Activated T-helper 1 cell treated with anti-CD3 and anti-CD28 coated beads, Interleukin-12 subunit alpha, Interleukin-12 subunit beta, Interleukin-2, Interleukin-4 antibody, amounts not matched to agents 30 ng/mL and 10 ng/mL and 1 ng/mL, durations not matched to agents 14 hours and 24 hours and 36 hours (primary cell): ENCODE measurements at regions of chr10 and their contacts with region 1.

Region 1: DNA sequence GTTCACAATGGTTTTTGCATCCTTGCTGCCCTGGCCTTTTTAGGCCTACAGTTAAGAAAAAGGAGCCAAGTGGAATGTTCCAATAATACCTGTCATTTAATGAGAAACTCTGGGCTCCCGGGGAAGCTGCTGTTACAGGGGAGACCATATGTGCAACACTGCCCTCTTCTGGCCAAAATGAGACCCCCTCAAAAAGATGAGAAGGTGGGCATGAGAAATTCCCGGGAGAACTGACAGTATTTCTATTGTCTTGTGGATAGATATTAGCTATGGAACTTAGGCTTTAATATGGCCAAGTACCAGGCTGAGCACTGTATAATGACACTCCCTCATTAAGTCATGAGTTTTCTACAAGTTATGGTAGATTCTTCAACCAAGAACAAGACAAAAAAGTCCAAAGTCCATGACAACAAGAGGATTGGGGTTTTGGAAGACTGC is 99.4 kb downstream of the CCDC3 start:
- DNase-seq: peak; percentile 25
- H3K4me3 Mint-ChIP-seq: no peak overlapping the region
- H3K27ac Mint-ChIP-seq: no peak overlapping the region
- H3K4me1 Mint-ChIP-seq: no peaks in the 10 kb centered on the region
- H3K27me3 Mint-ChIP-seq: no peaks in the 10 kb centered on the region

Region 2: GRCh38 chr10:12018438-12019282 is 883.5 kb before region 1 on chr10:
- intact Hi-C with region 1: no loop called
- DNase-seq: no peak
- H3K4me3 Mint-ChIP-seq: no peak overlapping the region
- H3K27ac Mint-ChIP-seq: no peak overlapping the region
- H3K4me1 Mint-ChIP-seq: peaks cover 8% of the 10 kb centered on the region
- H3K27me3 Mint-ChIP-seq: no peaks in the 10 kb centered on the region

Region 3: DNA sequence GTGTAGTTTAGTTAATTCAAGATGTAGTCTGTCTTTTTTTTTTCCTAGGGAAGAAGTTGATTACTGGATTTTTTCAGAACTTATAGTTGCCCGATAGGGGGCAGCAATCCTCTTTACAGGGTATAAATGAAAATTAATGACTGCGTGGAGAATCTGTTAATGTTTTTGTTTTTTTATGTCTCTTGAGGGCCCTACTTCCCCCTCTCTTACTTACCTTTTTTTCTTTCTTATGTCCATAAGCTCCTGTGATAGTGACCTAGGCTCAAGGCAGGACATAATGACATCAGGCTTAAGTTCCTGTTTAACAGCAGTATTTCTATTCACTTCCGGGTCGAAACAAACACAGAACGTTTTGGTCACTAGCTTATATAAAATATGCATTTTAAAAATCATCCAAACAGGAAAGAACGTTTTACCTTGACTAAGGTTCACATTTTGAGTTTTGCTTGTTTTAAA is 687.4 kb before region 1 on chr10:
- intact Hi-C with region 1: loop called (anchors 2 kb)
- DNase-seq: peak; percentile 15
- H3K4me3 Mint-ChIP-seq: peak overlapping the region; percentile 43
- H3K27ac Mint-ChIP-seq: peak overlapping the region; percentile 59
- H3K4me1 Mint-ChIP-seq: peaks cover 37% of the 10 kb centered on the region
- H3K27me3 Mint-ChIP-seq: no peaks in the 10 kb centered on the region

Region 4: DNA sequence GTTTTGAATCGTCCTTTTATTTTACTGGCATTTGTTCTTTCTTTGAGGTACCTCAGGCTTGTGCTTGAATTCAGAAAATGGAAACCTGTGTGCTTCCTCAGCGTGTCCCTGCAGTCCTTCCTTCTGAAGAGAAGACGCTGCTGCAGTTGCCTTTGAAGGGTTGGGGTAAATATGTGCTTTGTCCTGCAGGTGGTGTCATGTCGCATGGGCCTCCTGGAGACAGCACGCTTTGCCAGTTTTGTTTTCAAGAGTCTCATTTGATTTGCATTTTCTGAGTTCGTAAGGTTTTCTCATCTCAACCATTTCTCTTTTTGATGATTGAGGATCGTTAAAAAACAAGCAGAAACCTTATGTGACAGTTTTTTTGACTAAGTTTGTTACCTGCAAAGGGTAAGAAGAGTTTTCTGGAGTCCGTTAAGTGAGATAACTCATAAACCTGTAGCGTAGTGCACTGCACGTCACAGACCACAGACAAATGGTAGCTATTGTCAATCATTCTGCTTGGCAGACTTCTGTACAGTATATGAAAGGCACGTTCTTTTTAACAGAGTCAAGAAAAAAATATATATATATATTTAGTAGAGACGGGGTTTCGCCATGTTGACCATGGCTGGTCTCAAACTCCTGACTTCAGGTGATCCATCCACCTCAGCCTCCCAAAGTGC is 649.1 kb before region 1 on chr10:
- intact Hi-C with region 1: loop called (anchors 2 kb)
- DNase-seq: no peak
- H3K4me3 Mint-ChIP-seq: no peak overlapping the region
- H3K27ac Mint-ChIP-seq: no peak overlapping the region
- H3K4me1 Mint-ChIP-seq: no peaks in the 10 kb centered on the region
- H3K27me3 Mint-ChIP-seq: no peaks in the 10 kb centered on the region

Region 5: GRCh38 chr10:13087986-13088618 is 185.9 kb after region 1 on chr10:
- intact Hi-C with region 1: loop called (anchors 5 kb)
- DNase-seq: no peak
- H3K4me3 Mint-ChIP-seq: no peak overlapping the region
- H3K27ac Mint-ChIP-seq: no peak overlapping the region
- H3K4me1 Mint-ChIP-seq: peaks cover 6% of the 10 kb centered on the region
- H3K27me3 Mint-ChIP-seq: peaks cover 4% of the 10 kb centered on the region

Region 6: GRCh38 chr10:13247784-13248183 is 345.6 kb after region 1 on chr10:
- intact Hi-C with region 1: no loop called
- DNase-seq: no peak
- H3K4me3 Mint-ChIP-seq: no peak overlapping the region
- H3K27ac Mint-ChIP-seq: no peak overlapping the region
- H3K4me1 Mint-ChIP-seq: no peaks in the 10 kb centered on the region
- H3K27me3 Mint-ChIP-seq: peaks cover 5% of the 10 kb centered on the region